Activated CD8-positive, alpha-beta memory T cell treated with anti-CD3 and anti-CD28 coated beads, Interleukin-2, amount 10 ng/mL, durations not matched to agents 7 days and 5 days (primary cell): ENCODE measurements at regions of chr3 and their contacts with region 1.

Region 1: DNA sequence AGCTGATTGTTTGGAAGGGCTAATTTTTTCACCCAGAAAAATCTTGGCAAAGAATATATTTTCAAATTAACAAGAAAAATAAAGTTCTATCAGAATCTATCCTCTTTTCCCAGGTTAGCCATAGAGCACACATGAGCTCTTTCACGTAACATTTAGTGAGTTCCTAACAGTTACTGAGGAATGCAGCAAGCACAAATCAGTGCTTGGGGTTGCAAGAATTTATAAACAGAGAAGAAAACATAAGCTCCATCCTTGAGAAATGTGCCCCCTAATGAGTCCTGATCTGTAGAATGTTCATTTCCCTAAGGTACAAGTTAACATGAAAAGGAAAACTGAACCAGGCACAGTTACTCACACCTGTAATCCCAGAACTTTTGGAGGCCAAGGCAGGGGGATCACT is 13.9 kb downstream of the EOGT start:
- DNase-seq: no peak
- ATAC-seq: no peak
- H3K4me3 Mint-ChIP-seq: no peak overlapping the region
- H3K27ac Mint-ChIP-seq: no peak overlapping the region
- H3K4me1 Mint-ChIP-seq: peaks cover 16% of the 10 kb centered on the region
- H3K27me3 Mint-ChIP-seq: no peaks in the 10 kb centered on the region

Region 2: DNA sequence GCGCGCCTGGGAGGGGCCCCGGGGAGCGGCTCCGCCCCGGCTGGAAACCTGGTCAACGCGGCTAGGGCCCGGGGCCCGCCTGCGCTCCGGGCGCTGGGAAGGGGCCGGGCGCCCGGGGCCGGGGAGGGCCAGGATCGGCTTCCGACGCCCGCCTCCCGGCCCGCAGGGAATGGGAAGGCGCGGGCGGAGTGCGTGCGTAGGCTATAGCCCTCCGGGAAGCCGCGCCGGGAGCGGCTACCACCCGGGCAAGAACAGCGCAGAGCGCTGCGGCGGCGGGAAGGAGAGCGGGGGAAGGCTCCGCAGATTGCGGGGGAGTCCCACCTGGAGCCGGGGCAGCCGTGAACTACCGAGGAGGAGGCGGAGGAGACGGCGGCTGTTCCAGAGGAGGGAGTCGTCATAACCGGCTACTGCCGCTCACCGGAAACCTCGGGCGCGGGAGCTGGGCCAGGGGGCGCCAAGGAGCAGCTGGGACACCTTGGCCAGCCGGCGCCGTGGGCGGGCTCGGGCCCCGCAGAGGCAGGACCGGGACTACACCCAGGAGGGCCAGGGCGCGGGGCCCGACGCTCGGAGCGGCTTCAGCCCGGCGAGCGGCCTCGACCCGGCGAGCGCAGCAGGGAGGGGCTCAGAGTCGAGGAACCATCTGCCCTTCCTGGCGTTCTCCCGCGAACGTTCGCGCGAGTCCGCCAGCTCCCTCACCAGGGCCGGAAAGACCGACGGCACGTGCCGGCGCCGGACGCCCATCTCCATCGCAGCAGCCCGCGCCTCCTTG is 13.8 kb after region 1 on chr3 and contains the start of gene EOGT:
- CTCF ChIA-PET with region 1: interaction called, 14 read pairs
- DNase-seq: peak; percentile 88
- ATAC-seq: peak; percentile 91
- H3K4me3 Mint-ChIP-seq: peak within 1 kb of the TSS; percentile 81
- H3K27ac Mint-ChIP-seq: peak within 1 kb of the TSS; percentile 75
- H3K4me1 Mint-ChIP-seq: peaks cover 34% of the 10 kb centered on the region
- H3K27me3 Mint-ChIP-seq: no peaks in the 10 kb centered on the region
- total RNA-seq, gene EOGT: 15.4 to 15.5 TPM